ENCODE measurements at regions of chr15 and their contacts with region 1.

Region 1: DNA sequence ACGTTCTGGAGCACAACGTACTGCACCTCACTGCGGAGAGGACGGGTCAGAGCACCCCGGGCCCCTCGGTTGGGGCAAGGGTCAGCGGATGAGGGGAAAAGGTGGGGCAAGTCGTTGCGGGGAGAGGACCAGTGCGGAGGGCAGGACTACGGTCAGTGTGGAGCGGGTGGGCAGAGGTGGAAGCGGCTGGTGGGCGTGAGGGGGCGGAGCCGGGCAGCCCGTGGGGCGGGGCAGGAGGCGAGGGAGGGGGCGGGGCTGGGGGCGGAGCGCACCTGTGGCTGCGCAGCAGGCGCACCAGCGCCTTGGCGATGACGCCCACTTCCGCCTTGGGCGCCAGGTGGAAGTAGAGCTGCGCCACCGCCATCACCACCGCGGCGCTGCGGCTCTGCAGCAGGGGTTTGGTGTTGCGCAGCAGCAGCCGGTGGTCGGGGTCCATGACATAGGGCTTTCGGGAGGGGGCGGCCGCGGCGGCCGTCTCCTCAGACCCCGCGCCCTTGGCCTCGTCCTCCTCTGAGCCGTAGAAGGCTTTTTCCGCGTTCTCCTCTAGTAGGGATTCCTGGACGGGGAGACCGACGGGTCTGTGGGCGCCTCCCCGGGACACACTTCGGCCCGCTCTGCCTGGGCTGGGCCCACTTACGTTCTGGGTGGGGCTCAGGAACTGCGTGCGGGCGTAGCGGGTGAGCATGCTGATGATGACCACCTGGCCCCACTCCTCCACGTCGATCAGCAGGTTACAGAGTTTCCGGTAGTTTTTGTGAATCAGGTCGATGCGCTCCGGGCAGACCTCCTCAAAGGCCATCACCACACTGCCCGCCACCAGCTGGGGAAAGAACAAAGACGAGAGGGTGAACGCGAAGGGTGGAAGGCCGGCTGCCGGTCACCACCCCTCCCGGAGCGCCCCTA is 29.2 kb downstream of the AP3B2 start:
- DNase-seq: peak; percentile 86
- H3K4me3 Mint-ChIP-seq: peak overlapping the region; percentile 85
- H3K27ac Mint-ChIP-seq: peak overlapping the region; percentile 29
- H3K4me1 Mint-ChIP-seq: peaks cover 7% of the 10 kb centered on the region
- H3K27me3 Mint-ChIP-seq: no peaks in the 10 kb centered on the region

Region 2: GRCh38 chr15:82540055-82540983 is 140.1 kb before region 1 on chr15 and contains the start of gene RPS17:
- CTCF ChIA-PET with region 1: no interaction called
- POLR2A ChIA-PET with region 1: no interaction called
- intact Hi-C with region 1: loop called (anchors 2 kb)
- DNase-seq: peak; percentile 98
- H3K4me3 Mint-ChIP-seq: peak within 1 kb of the TSS; percentile 98
- H3K27ac Mint-ChIP-seq: peak within 1 kb of the TSS; percentile 88
- H3K4me1 Mint-ChIP-seq: peaks cover 27% of the 10 kb centered on the region
- H3K27me3 Mint-ChIP-seq: peaks cover 2% of the 10 kb centered on the region
- total RNA-seq, gene RPS17: 2,581 to 2,594 TPM

Region 3: GRCh38 chr15:82709421-82710207 is 29.2 kb after region 1 on chr15 and contains the start of gene AP3B2:
- CTCF ChIA-PET with region 1: no interaction called
- POLR2A ChIA-PET with region 1: no interaction called
- intact Hi-C with region 1: loop called (anchors 1 kb)
- DNase-seq: peak; percentile 76
- H3K4me3 Mint-ChIP-seq: peak within 1 kb of the TSS; percentile 63
- H3K27ac Mint-ChIP-seq: no peak within 1 kb of the TSS
- H3K4me1 Mint-ChIP-seq: no peaks in the 10 kb centered on the region
- H3K27me3 Mint-ChIP-seq: peaks cover 15% of the 10 kb centered on the region
- total RNA-seq, gene AP3B2: 0.40 TPM in 1 of 2 experiments, not detected in the other

Measured in activated CD4-positive, alpha-beta memory T cell treated with anti-CD3 and anti-CD28 coated beads for 36 hours (primary cell).